Activated B cell treated with CpG ODN at 0.5 μM for 24 hours (primary cell): ENCODE measurements at regions of chr18 and their contacts with region 1.

Region 1: DNA sequence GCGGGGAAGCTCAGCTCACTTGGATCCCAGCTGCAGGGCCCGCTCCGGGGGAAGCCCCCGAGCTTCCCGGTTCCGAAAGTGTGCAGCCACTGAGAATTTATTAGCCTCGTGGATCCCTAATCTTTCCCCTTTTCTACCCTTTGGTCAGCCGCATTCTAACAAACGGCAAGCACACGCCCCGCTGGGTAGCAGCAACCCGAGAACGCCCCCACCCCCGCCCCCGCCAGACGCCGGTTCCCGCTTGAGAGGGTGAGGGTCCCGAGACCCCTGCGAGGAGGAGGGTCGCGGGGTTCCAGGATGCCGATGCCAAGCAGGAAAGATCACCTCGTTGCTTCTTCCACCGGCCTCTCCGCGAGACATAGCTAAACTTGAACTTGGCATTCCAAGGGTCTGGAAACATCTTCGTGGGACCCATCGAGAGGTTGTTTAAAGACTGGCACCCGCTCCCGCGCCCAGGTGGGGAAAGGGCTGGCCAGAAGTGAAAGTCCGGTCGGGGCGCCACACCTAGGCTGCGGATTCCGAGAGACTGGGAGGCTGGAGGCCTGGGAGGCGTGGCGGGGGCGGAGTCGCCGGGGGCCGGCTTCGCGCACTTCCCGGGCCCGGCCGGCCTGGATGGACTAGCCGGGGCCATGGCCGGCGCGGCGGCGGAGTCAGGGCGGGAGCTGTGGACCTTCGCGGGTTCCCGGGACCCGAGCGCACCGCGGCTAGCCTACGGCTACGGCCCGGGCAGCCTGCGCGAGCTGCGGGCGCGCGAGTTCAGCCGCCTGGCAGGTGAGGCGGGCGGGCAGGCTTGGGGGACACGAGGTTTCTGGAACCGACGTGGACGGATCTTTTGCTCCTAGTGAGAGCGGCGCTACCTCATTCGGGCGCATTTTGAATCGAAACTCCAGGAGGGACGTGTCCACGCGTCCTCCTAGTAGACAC is at the start of gene MOCOS:
- DNase-seq: peak; percentile 56
- ATAC-seq: peak; percentile 60
- H3K4me3 Mint-ChIP-seq: peak within 1 kb of the TSS; percentile 84
- H3K27ac Mint-ChIP-seq: no peak within 1 kb of the TSS
- H3K4me1 Mint-ChIP-seq: peaks cover 29% of the 10 kb centered on the region
- H3K27me3 Mint-ChIP-seq: peaks cover 34% of the 10 kb centered on the region
- CTCF ChIP-seq: no peak
- total RNA-seq, gene MOCOS: 0.39 and 0.42 TPM in 2 replicates

Region 2: DNA sequence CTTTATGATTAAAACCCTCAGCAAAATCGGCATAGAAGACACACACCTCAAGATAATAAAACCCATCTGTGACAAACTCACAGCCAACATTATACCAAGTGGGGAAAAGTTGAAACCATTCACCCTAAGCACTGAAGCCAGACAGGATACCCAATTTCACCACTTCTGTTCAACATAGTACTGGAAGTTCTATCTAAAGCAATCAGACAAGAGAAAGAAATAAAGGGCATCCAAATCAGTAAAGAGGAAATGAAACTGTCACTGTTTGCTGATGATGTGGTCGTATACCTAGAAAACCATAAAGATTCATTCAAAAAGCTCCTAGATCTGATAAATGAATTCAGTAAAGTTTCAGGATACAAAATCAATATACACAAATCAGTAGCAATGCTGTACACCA is 103.4 kb before region 1 on chr18:
- CTCF ChIA-PET with region 1: no interaction called
- POLR2A ChIA-PET with region 1: no interaction called
- intact Hi-C with region 1: no loop called
- DNase-seq: no peak
- ATAC-seq: peak; percentile 34
- H3K4me3 Mint-ChIP-seq: no peak overlapping the region
- H3K27ac Mint-ChIP-seq: no peak overlapping the region
- H3K4me1 Mint-ChIP-seq: peaks cover 28% of the 10 kb centered on the region
- H3K27me3 Mint-ChIP-seq: no peaks in the 10 kb centered on the region
- CTCF ChIP-seq: no peak

Region 3: GRCh38 chr18:36149514-36150289 is 37.5 kb before region 1 on chr18:
- CTCF ChIA-PET with region 1: no interaction called
- POLR2A ChIA-PET with region 1: interaction called, 9 read pairs
- intact Hi-C with region 1: loop called (anchors 5 kb)
- DNase-seq: no peak
- ATAC-seq: peak; percentile 98
- H3K4me3 Mint-ChIP-seq: peak overlapping the region; percentile 61
- H3K27ac Mint-ChIP-seq: peak overlapping the region; percentile 89
- H3K4me1 Mint-ChIP-seq: peaks cover 54% of the 10 kb centered on the region
- H3K27me3 Mint-ChIP-seq: no peaks in the 10 kb centered on the region
- CTCF ChIP-seq: no peak

Region 4: DNA sequence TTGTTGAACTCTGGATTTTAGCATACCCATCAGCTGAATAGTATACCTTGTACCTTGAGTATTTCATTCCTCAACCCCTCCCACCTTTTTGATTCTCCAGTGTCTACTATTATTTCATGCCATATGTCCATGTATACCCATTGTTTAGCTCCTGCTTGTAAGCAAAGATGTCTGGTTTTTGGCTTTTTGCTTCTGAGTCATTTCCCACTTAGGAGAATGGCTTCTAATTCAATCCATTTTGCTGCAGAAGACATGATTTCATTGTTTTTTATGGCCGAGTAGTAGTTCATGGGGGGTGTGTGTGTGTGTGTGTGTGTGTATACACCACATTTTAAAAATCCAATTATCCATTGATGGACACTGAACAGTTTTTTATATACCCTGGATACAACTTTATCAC is 24.2 kb before region 1 on chr18:
- CTCF ChIA-PET with region 1: no interaction called
- POLR2A ChIA-PET with region 1: no interaction called
- intact Hi-C with region 1: no loop called
- DNase-seq: no peak
- ATAC-seq: no peak
- H3K4me3 Mint-ChIP-seq: no peak overlapping the region
- H3K27ac Mint-ChIP-seq: no peak overlapping the region
- H3K4me1 Mint-ChIP-seq: peaks cover 10% of the 10 kb centered on the region
- H3K27me3 Mint-ChIP-seq: no peaks in the 10 kb centered on the region
- CTCF ChIP-seq: no peak

Region 5: DNA sequence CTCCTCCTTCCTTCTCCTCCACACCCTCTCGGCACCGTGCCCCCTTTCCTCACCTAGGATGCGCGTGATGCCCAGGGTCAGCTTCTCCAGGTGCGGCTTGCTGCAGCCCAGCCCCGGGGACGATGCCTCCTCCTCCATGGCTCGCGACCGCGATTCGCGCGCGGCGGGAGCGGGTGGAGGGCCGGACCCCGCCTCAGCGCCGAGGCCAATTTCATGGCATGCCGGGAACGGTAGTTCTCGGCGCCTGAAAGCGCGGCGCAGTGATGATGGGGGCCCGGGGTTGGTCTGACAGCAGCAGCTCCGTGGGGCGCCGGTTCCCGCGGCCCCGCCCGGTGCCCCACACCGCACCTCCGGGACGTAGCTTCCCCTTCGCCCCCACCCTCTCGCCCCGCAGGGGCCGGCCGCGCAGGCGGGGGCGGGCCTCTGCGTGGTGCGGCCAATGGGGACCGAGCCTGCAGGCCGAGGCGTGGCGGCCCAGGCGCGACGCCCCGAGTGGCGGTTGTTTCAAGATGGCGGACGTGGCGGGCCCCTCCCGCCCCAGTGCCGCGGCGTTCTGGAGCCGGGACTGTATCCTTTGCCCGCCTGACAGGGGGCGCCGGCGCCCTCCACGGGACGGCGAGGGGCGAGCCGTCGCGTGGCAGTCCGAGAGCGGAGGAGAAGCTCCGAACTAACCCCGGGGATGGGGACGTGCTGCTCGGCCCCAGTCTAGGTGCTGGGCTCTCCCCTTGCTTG is 641.6 kb after region 1 on chr18 and contains the starts of genes KIAA1328 and TPGS2:
- CTCF ChIA-PET with region 1: no interaction called
- POLR2A ChIA-PET with region 1: no interaction called
- intact Hi-C with region 1: loop called (anchors 10 kb)
- DNase-seq: peak; percentile 88
- ATAC-seq: peak; percentile 91
- H3K4me3 Mint-ChIP-seq: peak within 1 kb of the TSS; percentile 94
- H3K27ac Mint-ChIP-seq: peak within 1 kb of the TSS; percentile 84
- H3K4me1 Mint-ChIP-seq: peaks cover 31% of the 10 kb centered on the region
- H3K27me3 Mint-ChIP-seq: no peaks in the 10 kb centered on the region
- CTCF ChIP-seq: no peak
- total RNA-seq, gene KIAA1328: 11.7 and 12.9 TPM in 2 replicates
- total RNA-seq, gene TPGS2: 42.1 and 45.1 TPM in 2 replicates